Spleen (tissue), 13 donors: ENCODE measurements at regions of chr6 and their contacts with region 1.

Region 1: GRCh38 chr6:156767603-156768467 is 9.3 kb upstream of the ARID1B start:
- DNase-seq: no peak
- H3K4me3 ChIP-seq: no peak overlapping the region
- H3K27ac ChIP-seq: peak overlapping the region in 3 of 8 donors; percentile 14 to 65 (median 48)
- H3K4me1 ChIP-seq: peaks cover 0 to 15% (median 4%) of the 10 kb centered on the region in 6 donors
- H3K27me3 ChIP-seq: no peaks in the 10 kb centered on the region
- CTCF ChIP-seq: no peak
- POLR2A ChIP-seq: no peak

Region 2: DNA sequence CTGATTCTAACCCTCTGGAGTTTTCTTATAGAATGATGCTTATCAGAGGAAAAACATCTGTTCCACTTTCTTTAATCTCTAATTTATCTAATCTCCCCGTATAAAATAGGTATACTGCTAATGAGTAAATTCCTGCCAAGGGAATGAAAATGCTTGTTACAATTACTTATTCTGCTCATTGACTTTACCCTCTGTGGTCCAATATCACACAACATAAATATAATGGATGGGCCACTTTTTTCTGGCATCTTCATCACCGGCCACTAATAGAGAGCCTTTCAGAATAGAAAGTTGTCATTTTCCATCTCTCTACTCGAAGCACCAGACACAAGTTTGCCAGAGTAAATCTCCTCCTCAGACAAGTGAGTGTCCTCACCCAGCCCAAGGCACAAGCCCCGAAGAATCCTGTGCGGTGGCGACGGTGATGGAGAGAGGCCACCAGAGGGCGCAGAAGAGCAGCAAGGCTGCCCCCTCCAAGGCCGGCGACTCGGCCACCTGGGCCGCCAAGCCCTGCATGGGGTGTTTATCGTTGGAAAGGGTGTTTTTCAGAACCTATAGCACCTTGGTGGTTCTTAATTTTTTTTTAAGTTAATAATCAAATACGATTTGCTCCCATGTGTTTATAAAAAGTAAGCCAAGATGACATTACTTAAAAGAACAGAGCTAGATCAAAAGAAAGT is 203.6 kb before region 1 on chr6:
- intact Hi-C with region 1: loop called (anchors 10 kb)
- DNase-seq: peak; percentile 95
- H3K4me3 ChIP-seq: no peak overlapping the region
- H3K27ac ChIP-seq: no peak overlapping the region
- H3K4me1 ChIP-seq: peaks cover 0 to 14% (median 7%) of the 10 kb centered on the region in 6 donors
- H3K27me3 ChIP-seq: no peaks in the 10 kb centered on the region
- CTCF ChIP-seq: peak; percentile 73 to 96 (median 88)
- POLR2A ChIP-seq: no peak

Region 3: GRCh38 chr6:156719720-156720563 is 47.9 kb before region 1 on chr6:
- intact Hi-C with region 1: no loop called
- DNase-seq: peak; percentile 97
- H3K4me3 ChIP-seq: peak overlapping the region in 7 of 8 donors; percentile 16 to 57 (median 31)
- H3K27ac ChIP-seq: peak overlapping the region; percentile 66 to 88 (median 84)
- H3K4me1 ChIP-seq: peaks cover 18 to 33% (median 25%) of the 10 kb centered on the region in 6 donors
- H3K27me3 ChIP-seq: no peaks in the 10 kb centered on the region
- CTCF ChIP-seq: no peak
- POLR2A ChIP-seq: peak in 1 of 3 donors; percentile 27